ENCODE measurements at regions of chr22 and their contacts with region 1.

Region 1: DNA sequence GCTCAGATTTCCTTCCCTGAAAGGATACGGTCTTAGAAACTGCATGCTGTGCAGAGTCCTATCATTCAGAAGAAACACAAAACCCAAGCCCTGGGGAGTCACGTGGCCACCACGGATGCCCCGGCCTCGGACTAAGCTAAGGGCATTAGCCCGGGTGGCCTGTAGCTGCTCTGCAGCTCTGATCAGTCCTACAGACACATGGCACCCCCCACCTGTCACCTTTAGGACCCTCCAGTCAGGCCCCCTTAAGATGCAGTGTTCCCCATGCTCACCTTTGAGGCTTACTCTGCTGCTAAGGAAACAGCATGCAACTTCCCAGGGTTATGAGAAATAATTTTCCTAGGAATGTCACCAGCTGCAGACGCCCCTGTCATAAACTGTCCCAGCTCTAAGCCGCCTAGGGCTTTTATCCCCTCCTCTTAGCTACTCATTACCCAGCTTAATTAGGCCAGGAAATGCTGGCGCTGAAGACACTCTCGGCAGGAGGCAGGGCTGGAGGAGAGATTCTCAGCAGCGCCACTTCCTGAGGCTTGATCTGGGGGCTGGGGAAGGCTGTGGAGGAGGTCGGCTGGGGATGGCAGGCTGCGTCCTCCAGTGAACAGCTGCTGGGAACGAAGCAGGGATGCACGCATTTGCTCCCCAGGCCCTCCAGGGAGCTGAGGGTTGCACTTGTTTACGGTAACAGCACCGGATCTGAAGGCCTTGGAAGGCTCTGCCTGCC is 47.2 kb upstream of the ADA2 start:
- DNase-seq: peak in 1 of 2 experiments; percentile 71
- H3K4me3 ChIP-seq: peak overlapping the region in 3 of 4 experiments; percentile 5 to 41 (median 10); a peak in 4 of 8 replicates
- H3K27ac ChIP-seq: peak overlapping the region; percentile 34
- H3K4me1 ChIP-seq: peaks cover 32 to 63% (median 45%) of the 10 kb centered on the region in 4 experiments
- H3K27me3 ChIP-seq: no peaks in the 10 kb centered on the region
- CTCF ChIP-seq: no peak
- EP300 ChIP-seq: no peak
- POLR2A ChIP-seq: no peak; a peak in 1 of 3 replicates
- RAD21 ChIP-seq: no peak

Region 2: GRCh38 chr22:17250380-17251090 is 15.9 kb before region 1 on chr22:
- CTCF ChIA-PET with region 1: interaction called, 10 read pairs
- POLR2A ChIA-PET with region 1: interaction called, 4 read pairs
- DNase-seq: no peak
- H3K4me3 ChIP-seq: no peak overlapping the region
- H3K27ac ChIP-seq: no peak overlapping the region
- H3K4me1 ChIP-seq: peaks cover 0 to 3% (median 3%) of the 10 kb centered on the region in 4 experiments; a peak in 3 of 7 replicates
- H3K27me3 ChIP-seq: no peaks in the 10 kb centered on the region
- CTCF ChIP-seq: no peak
- EP300 ChIP-seq: no peak
- POLR2A ChIP-seq: no peak
- RAD21 ChIP-seq: peak in 1 of 2 experiments; percentile 12; a peak in 1 of 4 replicates

Region 3: DNA sequence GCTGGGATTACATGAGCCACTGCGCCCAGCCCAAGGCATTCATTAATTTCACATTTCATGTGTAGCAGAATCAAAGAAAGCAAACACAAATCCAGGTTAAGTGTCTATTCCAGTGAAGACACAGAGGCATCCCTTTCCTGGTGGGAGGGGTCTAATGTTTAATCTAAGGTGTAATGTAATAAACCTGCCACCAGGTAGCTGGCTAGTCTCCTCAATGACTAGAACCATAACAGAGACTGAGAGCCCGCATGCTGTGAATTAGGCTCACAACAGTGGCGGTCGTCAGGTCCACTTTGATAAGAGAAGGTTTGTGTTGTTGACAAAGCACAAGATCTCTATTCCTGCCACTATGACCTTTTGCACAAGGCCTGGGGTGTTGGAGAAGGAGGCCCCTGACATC is 17.0 kb after region 1 on chr22:
- CTCF ChIA-PET with region 1: interaction called, 18 read pairs
- POLR2A ChIA-PET with region 1: interaction called, 3 read pairs
- DNase-seq: no peak
- H3K4me3 ChIP-seq: no peak overlapping the region
- H3K27ac ChIP-seq: no peak overlapping the region
- H3K4me1 ChIP-seq: no peaks in the 10 kb centered on the region
- H3K27me3 ChIP-seq: no peaks in the 10 kb centered on the region
- CTCF ChIP-seq: peak in 2 of 3 experiments; percentile 1 to 9; a peak in 2 of 4 replicates
- EP300 ChIP-seq: no peak
- POLR2A ChIP-seq: no peak
- RAD21 ChIP-seq: peak; percentile 22 to 38; a peak in 2 of 4 replicates

Region 4: GRCh38 chr22:17350292-17351065 is 84.1 kb after region 1 on chr22:
- CTCF ChIA-PET with region 1: no interaction called
- POLR2A ChIA-PET with region 1: no interaction called
- DNase-seq: no peak
- H3K4me3 ChIP-seq: no peak overlapping the region
- H3K27ac ChIP-seq: no peak overlapping the region
- H3K4me1 ChIP-seq: no peaks in the 10 kb centered on the region
- H3K27me3 ChIP-seq: no peaks in the 10 kb centered on the region
- CTCF ChIP-seq: no peak
- EP300 ChIP-seq: no peak
- POLR2A ChIP-seq: no peak
- RAD21 ChIP-seq: no peak

Region 5: DNA sequence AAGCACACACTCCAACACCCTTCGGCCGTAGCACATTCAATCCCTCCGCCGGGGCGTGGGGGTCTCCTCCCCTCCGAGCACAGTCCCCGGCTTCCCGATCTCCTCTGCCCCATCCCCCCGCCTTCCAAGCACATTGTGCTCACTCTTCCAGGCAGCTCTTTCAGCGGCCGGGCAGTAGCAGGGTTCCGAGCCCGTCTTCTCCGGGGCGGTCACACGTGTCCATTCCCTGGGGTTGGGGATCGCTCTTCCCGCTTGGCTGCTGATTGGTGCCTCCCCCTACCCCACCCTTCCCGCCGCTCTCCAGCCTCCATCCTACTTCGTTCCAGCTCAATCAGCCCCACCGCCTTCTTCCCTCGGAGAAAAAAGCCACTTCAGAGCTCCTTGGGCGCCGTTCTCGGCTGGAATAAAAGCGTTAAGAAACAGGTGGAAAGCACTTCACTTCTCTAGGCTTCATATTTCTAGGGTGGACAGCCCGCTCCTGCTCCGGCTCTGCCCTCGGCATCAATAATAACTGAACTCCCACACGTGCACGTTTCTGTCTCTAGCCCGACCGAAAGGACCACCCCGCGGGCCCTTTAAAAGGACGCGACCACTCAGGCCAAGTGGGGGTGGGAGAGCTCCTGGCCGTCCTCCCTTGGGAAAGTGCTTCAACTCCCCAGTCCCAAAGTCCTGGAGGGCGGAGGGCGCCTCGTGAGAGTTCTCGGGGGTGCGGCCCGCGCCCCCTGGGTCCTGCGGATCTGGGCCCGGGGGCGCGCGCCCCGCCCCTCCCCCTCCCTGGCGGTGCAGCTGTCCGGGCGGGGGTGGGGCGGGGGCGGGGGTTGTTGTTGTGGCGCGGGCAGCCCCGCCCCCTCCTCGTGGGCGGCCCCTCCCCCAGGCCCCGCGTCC is 102.4 kb after region 1 on chr22:
- CTCF ChIA-PET with region 1: interaction called, 12 read pairs
- POLR2A ChIA-PET with region 1: interaction called, 41 read pairs
- DNase-seq: peak; percentile 60 to 84
- H3K4me3 ChIP-seq: peak overlapping the region; percentile 65 to 92 (median 81)
- H3K27ac ChIP-seq: peak overlapping the region; percentile 91
- H3K4me1 ChIP-seq: peaks cover under 1 to 15% (median 6%) of the 10 kb centered on the region in 4 experiments; a peak in 6 of 7 replicates
- H3K27me3 ChIP-seq: no peaks in the 10 kb centered on the region
- CTCF ChIP-seq: no peak
- EP300 ChIP-seq: peak in 1 of 2 experiments; percentile 89; a peak in 2 of 3 replicates
- POLR2A ChIP-seq: peak; percentile 18 to 85
- RAD21 ChIP-seq: peak in 1 of 2 experiments; percentile 3; a peak in 2 of 4 replicates

Region 6: DNA sequence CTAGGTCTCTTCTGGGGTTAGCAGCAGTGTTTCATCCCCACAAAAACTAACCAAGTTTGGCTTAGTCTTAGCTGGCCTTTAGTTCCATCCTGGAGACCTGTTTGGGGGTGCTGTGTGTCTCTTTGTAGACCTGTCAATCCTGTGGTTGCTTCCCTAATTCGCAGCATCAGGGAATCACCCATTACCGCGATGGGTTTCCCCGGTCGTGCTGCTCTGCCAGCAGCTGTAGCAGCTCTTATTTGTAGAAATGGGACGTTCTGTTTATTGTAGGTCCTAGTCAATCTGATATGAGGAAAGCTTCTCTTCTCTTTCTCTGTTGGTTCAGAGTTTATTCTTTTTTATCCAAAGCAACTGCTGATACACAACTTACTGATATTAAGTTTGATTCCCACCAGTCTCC is 194.5 kb after region 1 on chr22:
- CTCF ChIA-PET with region 1: no interaction called
- POLR2A ChIA-PET with region 1: no interaction called
- DNase-seq: no peak
- H3K4me3 ChIP-seq: no peak overlapping the region
- H3K27ac ChIP-seq: no peak overlapping the region
- H3K4me1 ChIP-seq: peaks cover 7 to 14% (median 12%) of the 10 kb centered on the region in 4 experiments
- H3K27me3 ChIP-seq: no peaks in the 10 kb centered on the region
- CTCF ChIP-seq: no peak
- EP300 ChIP-seq: no peak
- POLR2A ChIP-seq: no peak
- RAD21 ChIP-seq: no peak

Region 7: DNA sequence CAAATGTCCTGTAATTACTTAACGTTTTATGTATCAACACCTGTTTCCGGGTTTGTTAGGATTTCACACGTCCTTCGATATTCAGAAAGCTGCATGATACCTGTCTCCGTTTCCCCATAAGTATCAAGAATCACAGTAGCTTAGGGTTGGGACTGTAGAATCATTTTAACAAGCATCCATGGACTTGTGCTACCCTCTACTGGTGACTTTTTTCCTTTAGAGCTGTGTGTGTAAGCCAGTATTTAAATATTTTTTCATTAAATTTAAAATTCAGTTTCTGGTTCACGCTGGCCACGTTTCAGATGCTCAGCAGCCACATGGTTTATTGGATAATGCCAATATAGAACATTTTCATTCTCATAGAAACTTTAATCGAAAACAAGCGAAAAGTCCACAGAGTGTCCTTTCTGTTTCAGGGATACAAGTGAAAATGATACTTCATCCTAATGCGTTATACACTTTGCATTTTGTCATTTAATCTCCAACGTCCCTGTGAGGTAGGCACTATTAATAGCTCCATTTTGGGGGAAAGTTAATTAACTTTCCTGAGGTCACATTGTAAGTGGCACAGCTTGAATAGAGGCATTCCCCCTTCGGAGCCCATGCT is 235.4 kb after region 1 on chr22:
- CTCF ChIA-PET with region 1: interaction called, 16 read pairs
- POLR2A ChIA-PET with region 1: no interaction called
- DNase-seq: no peak
- H3K4me3 ChIP-seq: no peak overlapping the region
- H3K27ac ChIP-seq: no peak overlapping the region
- H3K4me1 ChIP-seq: no peaks in the 10 kb centered on the region
- H3K27me3 ChIP-seq: no peaks in the 10 kb centered on the region
- CTCF ChIP-seq: peak in 2 of 3 experiments; percentile 52 to 63; a peak in 2 of 4 replicates
- EP300 ChIP-seq: no peak
- POLR2A ChIP-seq: no peak
- RAD21 ChIP-seq: peak; percentile 90 to 91